ENCODE measurements at regions of chrX and their contacts with region 1.

Region 1: GRCh38 chrX:9708904-9709553 is 56.6 kb downstream of the GPR143 start:
- DNase-seq: peak; percentile 65
- H3K4me3 ChIP-seq: no peak overlapping the region
- H3K27ac ChIP-seq: no peak overlapping the region
- H3K4me1 ChIP-seq: no peaks in the 10 kb centered on the region
- H3K27me3 ChIP-seq: no peaks in the 10 kb centered on the region

Region 2: GRCh38 chrX:8815464-8816065 is 893.5 kb before region 1 on chrX:
- in situ Hi-C with region 1: loop called (anchors 25 kb)
- DNase-seq: peak; percentile 34
- H3K4me3 ChIP-seq: no peak overlapping the region
- H3K27ac ChIP-seq: no peak overlapping the region
- H3K4me1 ChIP-seq: no peaks in the 10 kb centered on the region
- H3K27me3 ChIP-seq: no peaks in the 10 kb centered on the region

Region 3: DNA sequence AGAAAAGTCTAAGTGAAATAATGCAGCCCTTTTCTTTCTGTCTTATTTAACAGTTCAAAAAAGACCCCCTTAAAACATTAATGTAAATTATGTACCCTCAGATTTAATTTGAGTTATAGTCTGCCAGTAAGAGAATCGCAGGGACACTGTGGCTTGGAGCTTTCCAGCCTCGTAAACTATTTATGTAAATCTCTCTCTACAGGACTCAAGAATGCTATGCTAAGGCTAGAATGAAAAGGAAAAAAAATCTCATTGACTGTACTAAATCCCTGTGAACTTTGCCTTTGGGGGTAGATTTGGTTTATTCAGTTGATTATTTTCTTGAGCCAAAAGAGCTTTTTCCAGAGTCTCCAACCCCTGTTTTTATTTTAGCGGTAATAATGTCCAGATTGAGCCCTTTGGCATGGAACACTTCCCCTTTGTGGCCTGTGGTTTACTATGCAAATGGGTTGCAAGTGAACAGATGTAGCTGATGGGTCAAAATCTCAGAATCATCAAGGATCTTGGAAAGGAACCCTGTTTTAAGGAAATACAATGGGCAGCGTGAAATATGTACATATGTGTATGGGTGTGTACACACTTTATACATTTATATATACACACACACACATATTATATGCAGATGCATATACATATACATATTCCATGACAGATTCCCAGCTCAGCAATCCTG is 748.1 kb before region 1 on chrX:
- in situ Hi-C with region 1: loop called (anchors 10 kb)
- DNase-seq: peak; percentile 10
- H3K4me3 ChIP-seq: no peak overlapping the region
- H3K27ac ChIP-seq: no peak overlapping the region
- H3K4me1 ChIP-seq: no peaks in the 10 kb centered on the region
- H3K27me3 ChIP-seq: no peaks in the 10 kb centered on the region

Region 4: DNA sequence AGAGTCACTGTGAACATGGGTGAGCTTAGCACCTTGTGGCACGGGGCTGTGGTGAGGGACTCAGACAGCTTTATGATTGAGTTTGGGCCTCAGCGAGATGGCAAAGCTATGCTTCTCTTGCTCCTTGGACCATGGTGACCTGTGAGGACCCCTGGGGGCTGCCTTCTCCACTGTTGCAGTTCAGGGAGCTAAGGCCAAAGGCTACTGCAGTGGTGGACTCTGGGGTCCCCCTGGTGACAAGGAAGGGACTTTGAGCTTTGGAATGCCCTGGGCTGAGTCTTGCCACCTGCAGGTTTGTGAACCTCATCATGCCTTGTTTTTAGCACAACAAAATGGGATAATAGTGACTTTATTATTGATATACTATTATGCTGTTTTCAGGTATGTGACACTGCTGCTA is 207.7 kb before region 1 on chrX:
- in situ Hi-C with region 1: no loop called
- DNase-seq: no peak
- H3K4me3 ChIP-seq: no peak overlapping the region
- H3K27ac ChIP-seq: no peak overlapping the region
- H3K4me1 ChIP-seq: no peaks in the 10 kb centered on the region
- H3K27me3 ChIP-seq: no peaks in the 10 kb centered on the region

Measured in GM23248 (cell line).